RWPE1 (cell line): ENCODE measurements at regions of chr10 and their contacts with region 1.

Region 1: DNA sequence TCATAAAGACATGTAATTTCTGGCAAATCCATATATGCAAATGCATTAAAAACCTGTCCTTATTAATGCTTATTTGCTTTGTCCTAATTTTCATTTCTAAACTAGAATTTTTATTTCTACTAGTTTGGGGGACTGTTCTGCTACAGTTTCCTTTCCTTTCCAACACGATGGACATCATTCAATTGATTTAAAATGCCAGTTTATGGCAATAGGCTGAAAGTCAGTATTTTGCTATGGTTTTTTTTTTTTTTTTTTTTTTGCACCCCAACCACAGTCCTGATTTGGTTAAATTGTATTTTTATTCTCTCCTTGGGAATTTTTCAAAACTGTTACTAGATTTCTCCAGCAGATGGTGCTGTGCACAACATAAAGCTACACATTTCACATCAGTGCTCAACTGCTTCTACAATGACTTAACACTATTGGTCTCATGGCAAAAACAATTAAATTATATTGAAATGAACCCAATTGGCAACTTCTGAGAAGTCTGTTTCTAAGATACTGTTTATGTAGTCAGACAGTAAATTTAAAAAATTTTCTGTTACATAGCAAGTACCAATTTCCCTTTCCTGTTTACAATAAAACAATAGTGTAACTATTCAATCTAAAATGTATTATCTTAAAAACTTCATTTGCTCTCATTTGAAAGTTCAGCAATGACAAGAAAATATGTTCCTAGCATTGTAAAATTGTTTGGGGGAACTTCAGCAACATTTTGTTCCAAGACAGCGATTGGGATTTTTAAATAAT is 193.8 kb upstream of the CCDC6 start:
- DNase-seq: peak; percentile 32
- H3K27ac ChIP-seq: no peak overlapping the region
- CTCF ChIP-seq: peak; percentile 70

Region 2: DNA sequence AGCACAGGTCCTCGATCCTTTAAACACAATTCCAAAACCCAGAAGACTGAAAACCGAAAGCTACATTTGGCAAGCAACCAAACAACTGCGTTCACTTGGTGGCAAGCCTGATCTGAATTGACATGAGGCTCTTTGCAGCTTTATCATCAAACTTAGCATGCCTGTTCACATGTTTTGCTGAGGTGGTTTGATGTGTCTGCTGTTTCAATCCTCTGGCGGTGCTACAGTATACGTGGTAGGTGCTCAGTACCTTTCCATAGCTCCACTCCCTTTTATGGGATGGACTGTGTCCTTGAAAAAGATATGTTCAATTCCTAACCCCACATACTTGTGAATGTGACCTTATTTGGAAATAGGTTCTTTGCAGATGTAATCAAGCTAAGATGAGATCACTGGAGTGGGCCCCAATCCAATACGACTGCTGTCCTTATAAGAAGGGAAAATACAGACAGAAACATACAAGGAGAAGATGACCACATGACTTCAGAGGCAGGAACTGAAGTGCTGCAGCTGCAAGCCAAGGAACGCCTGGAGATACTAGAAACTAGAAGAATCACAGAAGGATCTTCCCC is 227.2 kb before region 1 on chr10:
- CTCF ChIA-PET with region 1: no interaction called
- POLR2A ChIA-PET with region 1: no interaction called
- DNase-seq: no peak
- H3K27ac ChIP-seq: no peak overlapping the region
- CTCF ChIP-seq: no peak

Region 3: DNA sequence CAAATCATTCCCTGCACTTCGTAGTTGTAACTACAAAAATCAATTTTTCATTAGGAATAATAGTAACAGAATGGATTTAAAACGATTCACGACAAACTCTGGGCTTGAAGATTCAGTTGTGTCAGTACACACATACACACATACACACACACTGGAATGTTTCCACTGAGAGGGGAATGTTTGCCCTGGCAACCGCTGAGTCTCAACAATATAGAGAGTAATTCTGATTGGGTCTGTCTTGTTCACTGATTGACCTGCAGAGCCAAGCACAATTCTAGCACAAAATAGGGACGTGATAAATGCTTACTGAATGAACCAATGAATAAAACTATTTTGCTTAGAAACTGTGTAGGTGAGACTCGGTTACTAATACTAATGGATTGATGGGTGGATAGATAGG is 10.6 kb after region 1 on chr10:
- CTCF ChIA-PET with region 1: no interaction called
- POLR2A ChIA-PET with region 1: no interaction called
- DNase-seq: no peak
- H3K27ac ChIP-seq: no peak overlapping the region
- CTCF ChIP-seq: no peak

Region 4: DNA sequence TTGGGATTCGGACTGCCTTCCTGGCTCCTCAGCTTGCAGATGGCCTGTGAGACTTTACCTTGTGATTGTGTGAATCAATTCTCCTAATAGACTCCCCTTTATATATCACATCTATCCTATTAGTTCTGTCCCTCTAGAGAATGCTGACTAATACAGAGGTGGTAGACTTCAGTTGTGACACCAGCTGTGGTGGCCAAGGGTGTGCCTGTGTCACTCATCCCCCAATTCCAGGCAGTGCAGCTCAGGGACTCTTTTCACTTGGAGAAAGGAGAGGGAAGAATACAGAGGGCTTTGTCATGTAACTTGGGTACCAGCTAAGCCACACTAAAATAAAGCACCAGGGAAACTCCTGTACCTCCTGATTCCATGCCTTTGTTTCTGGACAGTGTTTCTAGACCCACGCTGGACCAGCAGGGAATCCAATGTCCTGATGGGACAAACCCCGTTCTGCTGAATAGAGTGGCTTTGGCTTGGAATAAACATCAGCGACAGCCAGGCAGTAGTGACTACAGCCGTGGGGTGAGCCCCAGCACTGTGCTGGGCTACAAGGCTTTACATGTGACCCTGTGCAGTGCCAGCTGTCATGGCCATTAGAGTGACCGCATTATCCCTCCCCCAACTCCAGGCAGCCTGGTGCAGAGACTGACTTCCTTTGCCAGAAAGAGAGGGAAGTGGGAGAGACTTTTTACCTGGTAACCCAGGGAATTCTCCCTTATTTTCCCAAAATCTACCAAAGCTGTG is 55.9 kb after region 1 on chr10:
- CTCF ChIA-PET with region 1: no interaction called
- POLR2A ChIA-PET with region 1: no interaction called
- DNase-seq: no peak
- H3K27ac ChIP-seq: no peak overlapping the region
- CTCF ChIP-seq: no peak

Region 5: GRCh38 chr10:60170250-60170649 is 70.1 kb after region 1 on chr10:
- CTCF ChIA-PET with region 1: no interaction called
- POLR2A ChIA-PET with region 1: no interaction called
- DNase-seq: peak; percentile 4
- H3K27ac ChIP-seq: no peak overlapping the region
- CTCF ChIP-seq: no peak

Region 6: GRCh38 chr10:60208676-60209269 is 108.6 kb after region 1 on chr10:
- CTCF ChIA-PET with region 1: interaction called, 15 read pairs
- POLR2A ChIA-PET with region 1: no interaction called
- DNase-seq: peak; percentile 20
- H3K27ac ChIP-seq: no peak overlapping the region
- CTCF ChIP-seq: peak; percentile 79